ENCODE measurements at regions of chr14 and their contacts with region 1.

Region 1: DNA sequence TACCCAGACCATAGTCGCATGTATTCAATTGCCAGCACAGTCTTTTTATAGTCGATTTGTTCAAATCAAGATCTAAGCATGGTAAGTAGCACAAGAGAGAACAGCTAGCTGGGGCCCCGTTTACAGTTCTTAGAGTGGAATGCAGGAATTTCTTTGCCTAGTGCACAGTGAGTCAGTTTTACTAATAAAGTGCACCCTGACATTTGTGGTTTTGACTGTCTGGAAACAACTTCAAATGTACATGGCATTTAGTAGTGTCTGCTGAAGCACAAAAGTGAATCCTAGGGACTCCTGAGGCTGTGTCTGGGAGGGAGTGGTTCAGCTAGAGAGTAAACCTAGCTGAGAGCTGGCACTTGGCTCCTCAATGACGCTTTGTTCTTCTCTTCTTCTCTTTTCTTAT is 64.9 kb downstream of the TMX1 start:
- DNase-seq: no peak
- H3K4me3 ChIP-seq: no peak overlapping the region
- H3K27ac ChIP-seq: no peak overlapping the region
- H3K4me1 ChIP-seq: no peaks in the 10 kb centered on the region
- H3K27me3 ChIP-seq: no peaks in the 10 kb centered on the region
- CTCF ChIP-seq: no peak

Region 2: GRCh38 chr14:51365241-51365965 is 60.5 kb after region 1 on chr14:
- CTCF ChIA-PET with region 1: no interaction called
- POLR2A ChIA-PET with region 1: no interaction called
- intact Hi-C with region 1: loop called (anchors 2 kb)
- DNase-seq: no peak
- H3K4me3 ChIP-seq: no peak overlapping the region
- H3K27ac ChIP-seq: no peak overlapping the region
- H3K4me1 ChIP-seq: no peaks in the 10 kb centered on the region
- H3K27me3 ChIP-seq: no peaks in the 10 kb centered on the region
- CTCF ChIP-seq: no peak